Heart right ventricle (tissue), 16 donors: ENCODE measurements at regions of chr12 and their contacts with region 1.

Region 1: DNA sequence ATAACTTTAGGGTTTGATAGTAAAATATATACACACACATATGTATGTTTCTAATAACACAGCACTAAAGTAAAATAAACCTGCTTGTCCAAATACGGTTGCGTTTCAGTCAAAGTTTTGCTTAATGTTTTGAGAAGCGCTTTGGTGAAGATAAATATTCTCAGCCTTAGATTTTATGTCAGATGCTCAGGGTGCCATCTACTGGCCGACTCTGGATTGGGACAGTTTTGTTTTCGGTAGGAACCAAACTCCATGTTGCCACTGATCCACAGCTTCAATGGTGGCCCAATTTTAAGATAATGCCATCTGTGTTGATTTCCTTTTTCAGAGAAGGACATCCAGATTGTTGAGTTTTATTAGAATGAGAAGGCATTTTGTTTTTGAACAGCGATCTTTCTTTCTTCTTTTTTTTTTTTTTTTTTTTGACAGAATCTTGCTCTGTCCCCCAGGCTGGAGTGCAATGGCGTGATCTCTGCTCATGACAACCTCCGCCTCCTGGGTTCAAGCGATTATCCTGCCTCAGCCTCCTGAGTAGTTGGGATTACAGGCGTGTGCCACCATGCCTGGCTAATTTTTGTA is 43.1 kb downstream of the LLPH start:
- DNase-seq: peak; percentile 21 to 66
- ATAC-seq: peak in 4 of 8 donors; percentile 46 to 57 (median 51)
- H3K4me3 ChIP-seq: no peak overlapping the region
- H3K27ac ChIP-seq: no peak overlapping the region
- H3K4me1 ChIP-seq: peaks cover 0 to 5% (median 0%) of the 10 kb centered on the region in 9 donors
- H3K27me3 ChIP-seq: peaks cover 0 to 8% (median 0%) of the 10 kb centered on the region in 7 donors
- CTCF ChIP-seq: peak; percentile 45 to 86 (median 80)

Region 2: GRCh38 chr12:65306366-65307168 is 780.9 kb before region 1 on chr12:
- intact Hi-C with region 1: loop called in 1 of 10 experiments (anchors 10 kb)
- DNase-seq: peak; percentile 54 to 67
- ATAC-seq: peak; percentile 77 to 95 (median 92)
- H3K4me3 ChIP-seq: no peak overlapping the region
- H3K27ac ChIP-seq: peak overlapping the region in 7 of 10 donors; percentile 3 to 58 (median 34)
- H3K4me1 ChIP-seq: peaks cover 0 to 64% (median 46%) of the 10 kb centered on the region in 9 donors
- H3K27me3 ChIP-seq: no peaks in the 10 kb centered on the region
- CTCF ChIP-seq: peak in 8 of 9 donors; percentile 11 to 59 (median 49)

Region 3: GRCh38 chr12:65565601-65566560 is 521.6 kb before region 1 on chr12:
- intact Hi-C with region 1: loop called in 1 of 10 experiments (anchors 2 kb)
- DNase-seq: no peak
- ATAC-seq: peak in 6 of 8 donors; percentile 25 to 64 (median 45)
- H3K4me3 ChIP-seq: no peak overlapping the region
- H3K27ac ChIP-seq: peak overlapping the region in 5 of 10 donors; percentile 7 to 59 (median 42)
- H3K4me1 ChIP-seq: peaks cover 0 to 36% (median 20%) of the 10 kb centered on the region in 9 donors
- H3K27me3 ChIP-seq: peaks cover 0 to 3% (median 0%) of the 10 kb centered on the region in 7 donors
- CTCF ChIP-seq: no peak

Region 4: GRCh38 chr12:65602610-65603295 is 484.7 kb before region 1 on chr12:
- intact Hi-C with region 1: loop called in 3 of 10 experiments (anchors 5 kb)
- DNase-seq: peak; percentile 53 to 81
- ATAC-seq: peak; percentile 94 to 99 (median 96)
- H3K4me3 ChIP-seq: peak overlapping the region in 7 of 10 donors; percentile 2 to 46 (median 26)
- H3K27ac ChIP-seq: peak overlapping the region in 8 of 10 donors; percentile 17 to 70 (median 54)
- H3K4me1 ChIP-seq: peaks cover 0 to 32% (median 15%) of the 10 kb centered on the region in 9 donors
- H3K27me3 ChIP-seq: peaks cover 0 to 33% (median 0%) of the 10 kb centered on the region in 7 donors
- CTCF ChIP-seq: peak; percentile 53 to 85 (median 69)

Region 5: GRCh38 chr12:65986047-65986446 is 101.4 kb before region 1 on chr12:
- intact Hi-C with region 1: loop called in 1 of 10 experiments (anchors 10 kb)
- DNase-seq: no peak
- ATAC-seq: no peak
- H3K4me3 ChIP-seq: no peak overlapping the region
- H3K27ac ChIP-seq: no peak overlapping the region
- H3K4me1 ChIP-seq: no peaks in the 10 kb centered on the region
- H3K27me3 ChIP-seq: peaks cover 0 to 8% (median 0%) of the 10 kb centered on the region in 7 donors
- CTCF ChIP-seq: peak in 2 of 9 donors; percentile 7 to 25